Sigmoid colon (tissue), 7 donors: ENCODE measurements at regions of chr2 and their contacts with region 1.

Region 1: GRCh38 chr2:26330113-26330549 is 15.8 kb upstream of the SELENOI start:
- DNase-seq: peak; percentile 94
- H3K4me3 ChIP-seq: no peak overlapping the region
- H3K27ac ChIP-seq: peak overlapping the region in 1 of 4 donors; percentile 10
- H3K4me1 ChIP-seq: peaks cover 0 to 3% (median 0%) of the 10 kb centered on the region in 4 donors
- H3K27me3 ChIP-seq: no peaks in the 10 kb centered on the region
- CTCF ChIP-seq: peak; percentile 80 to 88 (median 87)
- EP300 ChIP-seq: no peak
- POLR2A ChIP-seq: no peak

Region 2: DNA sequence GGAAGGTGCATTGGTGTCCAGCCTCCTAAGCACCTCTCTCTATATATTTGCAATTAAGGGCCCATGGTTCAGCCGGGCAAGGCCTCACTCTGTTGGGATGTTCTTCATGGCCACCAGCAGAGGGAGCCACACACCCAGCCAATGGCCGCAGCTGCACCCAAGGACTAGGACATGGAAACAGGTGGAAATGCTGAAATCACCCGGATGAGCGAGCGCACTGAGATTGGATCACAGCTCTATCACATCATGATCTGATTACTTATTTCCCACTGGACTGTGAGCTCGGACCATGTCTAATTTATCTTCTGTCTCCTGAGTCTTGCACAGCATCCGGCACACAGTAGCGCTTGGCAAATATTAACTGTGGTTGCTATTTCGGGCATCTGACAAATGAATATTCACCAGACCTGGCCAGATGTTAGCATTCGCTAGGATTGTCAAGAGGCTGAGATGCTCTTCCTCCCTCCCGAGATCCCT is 379.0 kb before region 1 on chr2:
- intact Hi-C with region 1: loop called (anchors 2 kb)
- DNase-seq: peak; percentile 90
- H3K4me3 ChIP-seq: no peak overlapping the region
- H3K27ac ChIP-seq: peak overlapping the region in 3 of 4 donors; percentile 10 to 46 (median 39)
- H3K4me1 ChIP-seq: peaks cover 0 to 4% (median 0%) of the 10 kb centered on the region in 4 donors
- H3K27me3 ChIP-seq: no peaks in the 10 kb centered on the region
- CTCF ChIP-seq: peak; percentile 79 to 89 (median 88)
- EP300 ChIP-seq: no peak
- POLR2A ChIP-seq: no peak

Region 3: GRCh38 chr2:26244309-26245121 is 85.6 kb before region 1 on chr2 and contains the starts of genes HADHA and HADHB:
- intact Hi-C with region 1: loop called (anchors 2 kb)
- DNase-seq: peak; percentile 95
- H3K4me3 ChIP-seq: peak within 1 kb of the TSS; percentile 80 to 94 (median 86)
- H3K27ac ChIP-seq: peak within 1 kb of the TSS; percentile 91 to 96 (median 95)
- H3K4me1 ChIP-seq: peaks cover 0 to 59% (median 47%) of the 10 kb centered on the region in 4 donors
- H3K27me3 ChIP-seq: no peaks in the 10 kb centered on the region
- CTCF ChIP-seq: peak in 3 of 4 experiments; percentile 4 to 34 (median 19)
- EP300 ChIP-seq: peak in 1 of 4 donors; percentile 27
- POLR2A ChIP-seq: peak; percentile 36 to 51
- total RNA-seq, gene HADHA: 110 to 137 (median 118) TPM
- total RNA-seq, gene HADHB: 82.8 to 147 (median 119) TPM

Region 4: GRCh38 chr2:26299471-26300101 is 30.5 kb before region 1 on chr2:
- intact Hi-C with region 1: loop called (anchors 2 kb)
- DNase-seq: no peak
- H3K4me3 ChIP-seq: peak overlapping the region; percentile 39 to 69 (median 60)
- H3K27ac ChIP-seq: peak overlapping the region; percentile 84 to 88 (median 84)
- H3K4me1 ChIP-seq: peaks cover 0 to 23% (median 21%) of the 10 kb centered on the region in 4 donors
- H3K27me3 ChIP-seq: no peaks in the 10 kb centered on the region
- CTCF ChIP-seq: no peak
- EP300 ChIP-seq: peak in 1 of 4 donors; percentile 2
- POLR2A ChIP-seq: no peak

Region 5: GRCh38 chr2:26530696-26531095 is 200.6 kb after region 1 on chr2:
- intact Hi-C with region 1: no loop called
- DNase-seq: peak; percentile 54
- H3K4me3 ChIP-seq: no peak overlapping the region
- H3K27ac ChIP-seq: no peak overlapping the region
- H3K4me1 ChIP-seq: no peaks in the 10 kb centered on the region
- H3K27me3 ChIP-seq: no peaks in the 10 kb centered on the region
- CTCF ChIP-seq: no peak
- EP300 ChIP-seq: no peak
- POLR2A ChIP-seq: no peak